ENCODE measurements at regions of chr1 and their contacts with region 1.

Region 1: GRCh38 chr1:242120432-242120831 is 121.5 kb upstream of the MAP1LC3C start:
- DNase-seq: no peak
- ATAC-seq: no peak
- H3K4me3 ChIP-seq: no peak overlapping the region
- H3K27ac ChIP-seq: no peak overlapping the region
- H3K4me1 ChIP-seq: no peaks in the 10 kb centered on the region
- H3K27me3 ChIP-seq: no peaks in the 10 kb centered on the region
- CTCF ChIP-seq: no peak

Region 2: GRCh38 chr1:242605521-242605920 is 485.1 kb after region 1 on chr1:
- CTCF ChIA-PET with region 1: no interaction called
- POLR2A ChIA-PET with region 1: interaction called, 10 read pairs
- in situ Hi-C with region 1: no loop called
- intact Hi-C with region 1: no loop called
- DNase-seq: peak; percentile 2
- ATAC-seq: no peak
- H3K4me3 ChIP-seq: no peak overlapping the region
- H3K27ac ChIP-seq: no peak overlapping the region
- H3K4me1 ChIP-seq: no peaks in the 10 kb centered on the region
- H3K27me3 ChIP-seq: peaks cover 3% of the 10 kb centered on the region
- CTCF ChIP-seq: no peak